Head of caudate nucleus (tissue), 42 donors: ENCODE measurements at regions of chrX and their contacts with region 1.

Region 1: GRCh38 chrX:103831803-103832544 is at the start of gene RAB9B:
- DNase-seq: peak; percentile 30 to 91 (median 80)

Region 2: GRCh38 chrX:104136241-104137019 is 304.5 kb after region 1 on chrX:
- intact Hi-C with region 1: loop called (anchors 10 kb)
- DNase-seq: peak in 41 of 42 donors; percentile 12 to 91 (median 75)